IMR-90 (cell line): ENCODE measurements at regions of chr5 and their contacts with region 1.

Region 1: GRCh38 chr5:143403593-143404415 is at the start of gene NR3C1:
- DNase-seq: peak; percentile 86
- ATAC-seq: peak; percentile 82
- H3K4me3 ChIP-seq: peak within 1 kb of the TSS; percentile 97
- H3K27ac ChIP-seq: peak within 1 kb of the TSS; percentile 100
- H3K4me1 ChIP-seq: peaks cover 7% of the 10 kb centered on the region
- H3K27me3 ChIP-seq: no peaks in the 10 kb centered on the region
- CTCF ChIP-seq: peak; percentile 68
- POLR2A ChIP-seq: peak; percentile 55
- RAD21 ChIP-seq: peak; percentile 68
- total RNA-seq, gene NR3C1: 62.8 and 77.4 TPM in 2 replicates

Region 2: DNA sequence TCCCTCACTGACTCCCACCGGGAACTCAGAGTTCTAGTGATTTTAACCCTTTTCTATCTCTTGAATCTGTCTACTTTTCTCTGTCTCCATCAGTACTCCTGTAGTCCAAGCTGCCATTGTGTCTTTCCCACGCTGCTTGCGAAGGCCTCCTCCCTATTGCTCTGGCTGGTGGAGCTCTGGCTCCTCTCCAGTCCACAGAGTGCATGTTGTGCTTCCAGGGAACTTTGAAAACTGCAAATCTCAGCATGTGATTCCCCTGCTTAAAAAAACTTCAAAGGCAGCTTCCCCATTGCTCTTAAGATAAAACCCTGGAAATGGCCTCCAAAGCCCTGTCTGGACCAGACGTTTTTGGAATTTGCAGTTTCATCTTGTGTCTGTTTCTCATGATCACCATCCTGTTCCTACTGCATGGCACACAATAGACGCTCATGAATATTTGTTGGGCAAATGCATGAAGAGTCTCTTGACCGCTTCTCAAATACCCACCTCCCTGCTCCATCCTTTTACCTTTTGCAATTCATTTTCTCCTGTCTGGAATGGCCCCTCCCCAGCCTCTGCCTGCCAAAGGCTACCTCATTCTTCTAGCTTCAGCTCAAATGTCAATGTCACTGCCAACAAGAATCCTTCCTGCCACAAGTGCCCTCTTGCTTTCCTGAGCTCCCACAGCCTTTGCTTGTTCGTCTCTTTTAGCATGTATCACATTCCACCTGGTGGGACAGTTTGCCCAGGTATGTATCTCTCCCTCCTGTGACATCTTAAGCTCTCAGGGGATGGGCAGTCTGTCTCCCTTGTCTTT is 340.4 kb before region 1 on chr5:
- CTCF ChIA-PET with region 1: interaction called, 7 read pairs
- POLR2A ChIA-PET with region 1: no interaction called
- dilution Hi-C with region 1: no loop called
- in situ Hi-C with region 1: no loop called
- intact Hi-C with region 1: loop called (anchors 2 kb)
- DNase-seq: peak; percentile 51
- ATAC-seq: no peak
- H3K4me3 ChIP-seq: no peak overlapping the region
- H3K27ac ChIP-seq: peak overlapping the region; percentile 30; the same call in 1 of the 2 replicates
- H3K4me1 ChIP-seq: peaks cover 43% of the 10 kb centered on the region
- H3K27me3 ChIP-seq: no peaks in the 10 kb centered on the region
- CTCF ChIP-seq: no peak
- POLR2A ChIP-seq: no peak
- RAD21 ChIP-seq: no peak

Region 3: GRCh38 chr5:143244000-143244736 is 159.6 kb before region 1 on chr5:
- CTCF ChIA-PET with region 1: no interaction called
- POLR2A ChIA-PET with region 1: no interaction called
- dilution Hi-C with region 1: no loop called
- in situ Hi-C with region 1: no loop called
- intact Hi-C with region 1: loop called (anchors 5 kb)
- DNase-seq: peak; percentile 98
- ATAC-seq: peak; percentile 86
- H3K4me3 ChIP-seq: no peak overlapping the region
- H3K27ac ChIP-seq: peak overlapping the region; percentile 78
- H3K4me1 ChIP-seq: peaks cover 38% of the 10 kb centered on the region
- H3K27me3 ChIP-seq: no peaks in the 10 kb centered on the region
- CTCF ChIP-seq: no peak
- POLR2A ChIP-seq: peak; percentile 67; the same call in 1 of the 2 replicates
- RAD21 ChIP-seq: peak; percentile 53

Region 4: DNA sequence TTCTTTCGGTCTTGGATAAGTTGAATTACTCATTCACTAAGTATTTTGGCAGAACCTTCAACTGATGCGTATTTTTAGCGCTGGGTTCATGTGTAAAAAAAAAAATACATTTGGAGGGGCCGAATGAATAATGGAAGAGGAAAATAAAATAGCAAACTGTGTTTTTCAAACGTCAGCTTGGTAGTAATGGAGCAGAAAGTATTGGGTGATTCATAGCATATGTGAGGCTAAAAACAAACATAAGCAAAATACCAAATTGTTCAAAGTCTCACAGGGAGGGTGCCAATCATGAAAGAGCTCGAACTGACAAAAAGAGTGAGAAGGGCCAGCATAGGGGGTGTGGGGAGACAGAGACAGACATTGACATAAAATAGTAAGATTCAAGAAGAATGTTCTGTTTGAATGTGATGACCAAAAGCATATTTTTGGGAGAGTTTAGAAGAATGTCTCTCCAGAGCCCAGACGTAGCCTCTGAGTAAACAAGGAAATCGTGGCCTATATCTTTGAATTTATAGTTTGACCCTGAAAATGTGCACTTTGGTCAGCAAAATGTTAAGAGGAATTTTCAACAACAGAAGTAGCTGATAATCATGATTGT is 233.2 kb after region 1 on chr5:
- CTCF ChIA-PET with region 1: no interaction called
- POLR2A ChIA-PET with region 1: no interaction called
- dilution Hi-C with region 1: no loop called
- in situ Hi-C with region 1: no loop called
- intact Hi-C with region 1: loop called (anchors 2 kb)
- DNase-seq: peak; percentile 69
- ATAC-seq: peak; percentile 16; the same call in 1 of the 2 replicates
- H3K4me3 ChIP-seq: no peak overlapping the region
- H3K27ac ChIP-seq: no peak overlapping the region
- H3K4me1 ChIP-seq: peaks cover 18% of the 10 kb centered on the region
- H3K27me3 ChIP-seq: no peaks in the 10 kb centered on the region
- CTCF ChIP-seq: no peak
- POLR2A ChIP-seq: no peak
- RAD21 ChIP-seq: no peak

Region 5: DNA sequence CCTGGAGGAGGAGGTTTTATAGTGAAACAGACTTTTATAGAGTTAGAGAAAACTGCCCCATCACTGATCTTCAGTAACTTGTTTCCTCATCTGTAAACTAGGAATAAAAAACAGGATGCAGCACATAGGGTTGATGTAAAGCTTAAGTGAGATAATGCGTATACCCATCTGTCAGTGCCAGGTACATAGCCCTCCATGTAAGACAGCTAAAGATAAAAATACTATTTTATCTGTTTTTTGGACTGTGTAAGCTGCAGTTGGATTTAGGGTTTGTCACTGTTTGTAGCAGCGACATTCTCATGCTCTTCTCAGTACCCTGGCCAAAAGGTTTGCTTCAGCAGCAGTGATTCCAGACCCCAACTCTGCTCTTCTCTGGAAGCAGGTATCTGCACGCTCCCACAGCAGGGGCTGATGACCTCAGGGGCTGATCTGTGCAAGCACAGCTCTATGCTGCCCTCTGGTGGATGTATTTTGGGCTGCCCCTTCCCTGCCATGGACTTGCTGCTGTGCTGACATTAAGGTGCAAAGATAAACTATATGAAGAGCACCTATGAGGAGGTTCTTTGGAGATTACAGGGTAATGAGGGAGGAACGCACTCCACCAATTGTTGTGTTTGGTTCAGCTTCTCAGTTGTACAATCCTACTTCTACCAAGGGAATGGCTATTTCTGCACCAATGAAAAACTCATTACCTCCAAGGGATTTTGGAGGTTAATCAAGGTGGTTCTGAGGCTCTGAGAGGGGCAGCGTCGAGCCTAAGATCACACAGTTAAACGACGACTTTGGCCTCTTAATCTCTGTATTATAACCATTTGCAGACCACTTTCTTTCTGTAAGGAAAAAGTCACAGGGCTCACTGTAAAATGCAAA is 421.3 kb after region 1 on chr5:
- CTCF ChIA-PET with region 1: interaction called, 8 read pairs
- POLR2A ChIA-PET with region 1: no interaction called
- dilution Hi-C with region 1: no loop called
- in situ Hi-C with region 1: loop called (anchors 10 kb)
- intact Hi-C with region 1: loop called (anchors 1 kb)
- DNase-seq: peak; percentile 75
- ATAC-seq: peak; percentile 88
- H3K4me3 ChIP-seq: no peak overlapping the region
- H3K27ac ChIP-seq: no peak overlapping the region
- H3K4me1 ChIP-seq: peaks cover 8% of the 10 kb centered on the region
- H3K27me3 ChIP-seq: no peaks in the 10 kb centered on the region
- CTCF ChIP-seq: peak; percentile 87
- POLR2A ChIP-seq: 0 out of 2 replicates have a peak, but pooled peaks have one; percentile 38
- RAD21 ChIP-seq: peak; percentile 99

Region 6: GRCh38 chr5:144048259-144048856 is 644.6 kb after region 1 on chr5:
- CTCF ChIA-PET with region 1: no interaction called
- POLR2A ChIA-PET with region 1: no interaction called
- dilution Hi-C with region 1: no loop called
- in situ Hi-C with region 1: no loop called
- intact Hi-C with region 1: no loop called
- DNase-seq: no peak
- ATAC-seq: peak; percentile 77
- H3K4me3 ChIP-seq: no peak overlapping the region
- H3K27ac ChIP-seq: no peak overlapping the region
- H3K4me1 ChIP-seq: peaks cover 5% of the 10 kb centered on the region
- H3K27me3 ChIP-seq: no peaks in the 10 kb centered on the region
- CTCF ChIP-seq: no peak
- POLR2A ChIP-seq: no peak
- RAD21 ChIP-seq: no peak

Region 7: GRCh38 chr5:144072518-144072927 is 668.7 kb after region 1 on chr5:
- CTCF ChIA-PET with region 1: no interaction called
- POLR2A ChIA-PET with region 1: no interaction called
- dilution Hi-C with region 1: no loop called
- in situ Hi-C with region 1: no loop called
- intact Hi-C with region 1: no loop called
- DNase-seq: peak; percentile 84
- ATAC-seq: peak; percentile 82
- H3K4me3 ChIP-seq: no peak overlapping the region
- H3K27ac ChIP-seq: no peak overlapping the region
- H3K4me1 ChIP-seq: peaks cover 17% of the 10 kb centered on the region
- H3K27me3 ChIP-seq: no peaks in the 10 kb centered on the region
- CTCF ChIP-seq: no peak
- POLR2A ChIP-seq: no peak
- RAD21 ChIP-seq: no peak